ENCODE measurements at regions of chr12 and their contacts with region 1.

Region 1: GRCh38 chr12:12562585-12563261 is at the start of gene DUSP16:
- DNase-seq: peak; percentile 97
- total RNA-seq, gene DUSP16: 24.5 TPM

Region 2: GRCh38 chr12:11307143-11307542 is 1255.6 kb before region 1 on chr12:
- intact Hi-C with region 1: no loop called
- DNase-seq: no peak

Region 3: DNA sequence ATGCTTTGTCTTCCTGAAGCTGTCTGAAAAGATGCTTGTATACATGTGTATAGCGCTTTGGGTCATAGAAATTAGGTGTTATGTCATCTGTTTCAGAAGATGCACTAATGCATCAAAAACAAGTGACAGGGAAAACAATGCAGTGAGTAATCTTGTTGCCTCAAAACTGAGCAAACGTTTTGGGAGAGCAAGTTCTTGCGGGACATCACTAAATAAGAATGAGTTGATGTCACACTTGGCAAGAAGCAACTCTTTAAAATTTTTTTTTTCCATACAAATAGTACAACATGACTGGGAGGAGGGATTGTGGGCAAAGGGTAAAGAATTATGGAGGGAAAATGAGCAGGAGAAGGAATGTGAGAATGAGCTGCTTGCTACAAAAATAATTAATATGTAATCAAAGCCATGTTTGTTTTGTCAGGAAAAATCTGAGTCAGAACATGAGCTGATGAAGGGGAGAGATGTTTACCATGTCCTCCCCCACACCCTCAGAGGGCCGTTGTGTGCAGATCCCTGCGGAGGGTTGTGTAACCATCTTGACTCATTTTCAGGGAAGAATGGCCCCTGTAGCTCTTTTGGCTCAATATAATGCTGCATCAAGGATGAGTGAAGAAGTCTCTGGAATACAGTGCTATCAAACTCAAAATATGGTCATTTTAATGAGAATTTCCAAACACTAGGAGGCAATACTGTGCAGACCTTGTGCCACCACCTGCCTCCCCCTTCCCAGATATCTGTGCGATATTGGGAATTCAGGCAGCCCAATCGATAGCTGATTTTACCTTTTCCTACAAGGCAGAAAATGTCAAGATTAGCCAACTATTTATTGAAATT is 164.5 kb before region 1 on chr12:
- intact Hi-C with region 1: loop called (anchors 5 kb)
- DNase-seq: no peak

Region 4: DNA sequence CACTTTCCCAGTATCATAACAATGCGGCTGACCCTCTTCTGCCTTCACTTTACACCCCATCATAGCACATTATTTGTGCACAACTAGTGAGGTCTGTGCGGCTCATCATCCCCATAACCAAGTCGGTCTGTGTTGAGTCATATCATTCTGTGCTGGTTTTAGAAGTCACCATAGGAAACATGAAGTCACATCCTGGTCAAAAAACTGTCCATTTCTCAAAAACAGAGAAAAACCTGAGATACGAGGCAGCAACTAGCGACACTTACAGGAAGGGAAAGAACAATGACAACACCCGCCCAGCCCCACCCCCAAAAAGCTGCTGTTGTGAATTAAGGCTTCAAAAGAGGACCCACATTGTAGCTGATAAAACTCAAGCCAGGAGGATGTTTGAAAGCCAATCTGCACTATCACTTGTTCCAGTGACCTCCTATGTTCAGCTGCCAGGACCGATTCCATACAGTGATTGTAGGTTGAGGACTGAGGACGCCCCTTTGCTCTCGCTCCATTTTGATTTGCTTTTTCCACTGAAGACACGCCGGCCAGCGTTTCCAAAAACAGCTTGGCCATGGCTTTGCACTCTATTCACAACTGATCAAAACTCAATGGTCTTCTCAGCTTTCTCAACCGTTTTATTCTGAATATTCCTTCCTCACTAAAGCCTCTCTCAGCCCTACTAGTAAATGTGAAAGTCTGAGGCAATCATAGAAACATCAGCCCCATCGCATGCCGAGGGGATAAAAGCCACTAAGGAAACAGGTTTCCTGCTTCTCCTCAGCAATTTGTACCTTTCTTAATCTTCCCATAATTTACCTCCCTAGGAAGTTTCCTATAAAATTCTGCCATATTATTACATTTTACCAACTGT is 87.6 kb before region 1 on chr12:
- intact Hi-C with region 1: loop called (anchors 2 kb)
- DNase-seq: no peak

Region 5: DNA sequence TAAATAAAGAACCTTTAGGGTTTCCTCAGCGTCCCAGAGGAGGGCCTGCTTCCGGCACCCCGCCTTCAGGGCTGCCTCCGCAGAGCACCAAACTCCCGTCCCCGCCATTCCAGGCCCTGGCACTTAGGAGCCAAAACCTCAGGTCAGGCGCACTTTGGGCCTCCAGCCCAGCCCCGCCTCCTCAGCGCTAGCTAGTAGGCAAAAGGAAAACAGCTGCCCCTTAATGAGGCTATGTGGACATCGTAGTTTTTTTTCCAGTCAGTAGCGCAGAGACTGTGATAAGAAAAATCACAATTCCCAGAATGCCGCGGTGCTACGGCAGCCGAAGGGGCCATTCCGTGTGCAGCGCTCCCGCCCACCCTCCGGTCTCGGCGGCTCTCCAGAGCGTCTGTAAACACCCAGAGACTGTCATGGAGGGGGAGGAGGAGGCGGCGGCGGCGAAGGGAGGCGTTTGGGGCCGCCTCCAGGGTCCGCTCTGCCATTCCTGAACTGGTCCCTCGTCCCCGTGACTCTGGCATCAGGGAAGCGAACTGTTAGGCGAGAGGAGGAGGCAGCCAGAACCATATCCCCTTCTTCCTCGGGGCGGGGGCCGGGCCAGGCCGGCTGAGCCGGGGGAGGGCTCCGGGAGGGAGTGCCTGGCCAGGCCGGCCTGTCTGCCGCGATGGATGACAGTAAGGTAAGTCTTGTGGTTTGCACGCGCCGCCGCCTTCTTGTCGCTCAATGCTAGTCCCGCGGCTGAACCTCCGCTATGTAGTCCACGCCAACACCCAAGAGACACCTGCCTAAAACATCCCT is 49.0 kb after region 1 on chr12 and contains the start of gene CREBL2:
- intact Hi-C with region 1: loop called (anchors 1 kb)
- DNase-seq: peak; percentile 95
- total RNA-seq, gene CREBL2: 20.0 TPM

Region 6: GRCh38 chr12:12684375-12685106 is 121.8 kb after region 1 on chr12:
- intact Hi-C with region 1: no loop called
- DNase-seq: no peak

Region 7: GRCh38 chr12:12724661-12725545 is 162.2 kb after region 1 on chr12:
- intact Hi-C with region 1: loop called (anchors 2 kb)
- DNase-seq: peak; percentile 95